ENCODE measurements at regions of chrX and their contacts with region 1.

Region 1: GRCh38 chrX:69615779-69616456 is at the start of gene EDA:
- DNase-seq: peak; percentile 93
- H3K4me3 Mint-ChIP-seq: peak within 1 kb of the TSS; percentile 96
- H3K27ac Mint-ChIP-seq: peak within 1 kb of the TSS; percentile 50
- H3K4me1 Mint-ChIP-seq: peaks cover 8% of the 10 kb centered on the region
- H3K27me3 Mint-ChIP-seq: no peaks in the 10 kb centered on the region
- CTCF ChIP-seq: no peak
- total RNA-seq, gene EDA: 5.0 and 5.7 TPM in 2 replicates

Region 2: GRCh38 chrX:68822641-68823410 is 793.1 kb before region 1 on chrX:
- CTCF ChIA-PET with region 1: no interaction called
- intact Hi-C with region 1: loop called (anchors 5 kb)
- DNase-seq: peak; percentile 46
- H3K4me3 Mint-ChIP-seq: no peak overlapping the region
- H3K27ac Mint-ChIP-seq: no peak overlapping the region
- H3K4me1 Mint-ChIP-seq: peaks cover 4% of the 10 kb centered on the region
- H3K27me3 Mint-ChIP-seq: peaks cover 24% of the 10 kb centered on the region
- CTCF ChIP-seq: peak; percentile 29

Region 3: GRCh38 chrX:69493193-69493592 is 122.7 kb before region 1 on chrX:
- CTCF ChIA-PET with region 1: interaction called, 6 read pairs
- intact Hi-C with region 1: loop called (anchors 2 kb)
- DNase-seq: peak; percentile 69
- H3K4me3 Mint-ChIP-seq: no peak overlapping the region
- H3K27ac Mint-ChIP-seq: no peak overlapping the region
- H3K4me1 Mint-ChIP-seq: peaks cover 11% of the 10 kb centered on the region
- H3K27me3 Mint-ChIP-seq: peaks cover 13% of the 10 kb centered on the region
- CTCF ChIP-seq: peak; percentile 48

Region 4: GRCh38 chrX:69538321-69538876 is 77.5 kb before region 1 on chrX:
- CTCF ChIA-PET with region 1: interaction called, 9 read pairs
- intact Hi-C with region 1: loop called (anchors 1 kb)
- DNase-seq: peak; percentile 82
- H3K4me3 Mint-ChIP-seq: peak overlapping the region; percentile 82
- H3K27ac Mint-ChIP-seq: peak overlapping the region; percentile 77
- H3K4me1 Mint-ChIP-seq: peaks cover 12% of the 10 kb centered on the region
- H3K27me3 Mint-ChIP-seq: no peaks in the 10 kb centered on the region
- CTCF ChIP-seq: peak; percentile 75

Region 5: GRCh38 chrX:70030301-70030767 is 414.4 kb after region 1 on chrX:
- CTCF ChIA-PET with region 1: interaction called, 3 read pairs
- intact Hi-C with region 1: loop called (anchors 2 kb)
- DNase-seq: peak; percentile 73
- H3K4me3 Mint-ChIP-seq: no peak overlapping the region
- H3K27ac Mint-ChIP-seq: no peak overlapping the region
- H3K4me1 Mint-ChIP-seq: peaks cover 40% of the 10 kb centered on the region
- H3K27me3 Mint-ChIP-seq: no peaks in the 10 kb centered on the region
- CTCF ChIP-seq: peak; percentile 70

Region 6: GRCh38 chrX:70096052-70096451 is 480.1 kb after region 1 on chrX:
- CTCF ChIA-PET with region 1: interaction called, 4 read pairs
- intact Hi-C with region 1: loop called (anchors 5 kb)
- DNase-seq: peak; percentile 35
- H3K4me3 Mint-ChIP-seq: no peak overlapping the region
- H3K27ac Mint-ChIP-seq: no peak overlapping the region
- H3K4me1 Mint-ChIP-seq: peaks cover 7% of the 10 kb centered on the region
- H3K27me3 Mint-ChIP-seq: no peaks in the 10 kb centered on the region
- CTCF ChIP-seq: peak; percentile 21

Measured in Calu3 (cell line).